Dendritic cell treated with granulocyte-macrophage colony-stimulating factor and Interleukin-4, amounts not matched to agents 40 ng/mL and 50 ng/mL, for 4 days (primary cell): ENCODE measurements at regions of chr17 and their contacts with region 1.

Region 1: DNA sequence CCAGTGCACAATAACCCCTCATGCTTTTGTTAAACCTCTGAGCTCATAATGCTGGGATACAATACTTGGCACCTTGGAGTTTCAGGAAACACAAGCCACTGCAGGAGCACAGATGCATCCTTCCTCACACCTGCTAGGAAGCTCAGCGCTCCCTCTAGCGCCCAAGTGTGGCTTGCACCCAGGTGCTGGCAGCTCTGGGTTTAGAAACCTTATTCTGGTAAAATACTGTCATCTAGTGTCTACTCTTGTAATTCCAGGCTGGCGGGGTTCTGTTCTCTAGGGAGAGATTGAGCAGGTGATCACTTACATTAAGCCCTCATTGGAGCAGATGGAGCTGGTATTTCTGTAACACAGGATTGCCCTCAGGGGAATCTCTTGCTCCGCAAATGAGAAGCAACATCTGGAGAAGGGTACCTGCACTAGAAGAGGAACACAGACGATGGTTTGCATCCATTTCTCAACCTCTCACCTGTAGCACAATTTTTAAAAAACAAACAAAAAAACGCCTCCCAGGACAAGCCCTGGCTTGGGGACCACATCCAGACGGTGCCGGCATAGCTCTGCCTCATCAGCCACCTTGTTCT is 1.5 kb downstream of the CCL1 start:
- H3K4me3 Mint-ChIP-seq: no peak overlapping the region
- H3K27ac Mint-ChIP-seq: no peak overlapping the region
- H3K4me1 Mint-ChIP-seq: peaks cover 65% of the 10 kb centered on the region
- H3K27me3 Mint-ChIP-seq: peaks cover 18% of the 10 kb centered on the region

Region 2: DNA sequence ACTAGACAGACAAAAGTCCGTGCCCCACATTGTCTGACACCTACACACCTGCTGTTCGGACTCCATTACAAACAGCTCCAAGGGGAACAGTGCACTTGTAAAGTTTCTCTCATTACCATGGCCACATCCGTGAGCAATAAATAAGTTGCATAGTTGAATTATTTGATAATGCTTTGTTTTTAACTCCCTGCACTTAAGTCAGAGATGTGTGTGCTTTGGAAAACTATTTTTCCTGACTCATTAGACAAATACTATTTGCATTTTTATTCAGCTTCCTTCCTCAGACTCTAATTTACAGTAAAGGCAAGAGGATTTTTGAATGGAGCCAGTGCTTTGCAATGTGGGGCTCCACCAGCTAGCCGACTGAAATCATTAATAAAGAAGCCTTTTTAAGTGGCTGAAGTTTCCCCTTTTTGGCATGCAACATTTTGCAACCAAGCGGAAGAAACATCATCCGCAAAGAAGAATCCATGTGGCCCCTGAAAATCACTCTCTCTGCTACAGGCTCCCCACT is 113.0 kb before region 1 on chr17:
- intact Hi-C with region 1: loop called (anchors 5 kb)
- H3K4me3 Mint-ChIP-seq: no peak overlapping the region
- H3K27ac Mint-ChIP-seq: no peak overlapping the region
- H3K4me1 Mint-ChIP-seq: peaks cover 61% of the 10 kb centered on the region
- H3K27me3 Mint-ChIP-seq: peaks cover 19% of the 10 kb centered on the region

Region 3: GRCh38 chr17:34318474-34318873 is 43.1 kb before region 1 on chr17:
- intact Hi-C with region 1: loop called (anchors 5 kb)
- H3K4me3 Mint-ChIP-seq: no peak overlapping the region
- H3K27ac Mint-ChIP-seq: peak overlapping the region; percentile 83
- H3K4me1 Mint-ChIP-seq: peaks cover 78% of the 10 kb centered on the region
- H3K27me3 Mint-ChIP-seq: peaks cover 2% of the 10 kb centered on the region